ENCODE measurements at regions of chr5 and their contacts with region 1.

Region 1: DNA sequence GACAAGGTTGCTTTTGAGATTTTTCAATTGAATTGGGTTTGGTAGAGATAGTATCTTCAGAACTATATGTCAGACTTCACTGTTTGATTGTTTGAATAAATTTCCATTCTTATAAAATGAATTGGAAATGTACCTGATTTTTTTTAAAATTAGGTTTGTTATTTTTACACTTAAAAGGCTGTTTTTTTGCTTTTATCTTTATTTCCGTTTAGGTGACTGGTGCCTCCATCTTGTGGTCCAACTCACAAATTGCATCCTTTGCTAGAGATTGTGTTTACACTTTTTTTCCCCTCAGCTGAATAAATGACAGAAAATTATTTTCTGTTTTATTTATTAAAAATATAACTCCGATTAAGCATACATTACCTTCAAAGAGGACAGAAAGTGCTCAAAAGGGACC is 15.6 kb downstream of the NDUFAF2 start:
- DNase-seq: no peak
- H3K4me3 ChIP-seq: no peak overlapping the region
- H3K27ac ChIP-seq: no peak overlapping the region
- H3K4me1 ChIP-seq: no peaks in the 10 kb centered on the region
- H3K27me3 ChIP-seq: no peaks in the 10 kb centered on the region
- CTCF ChIP-seq: peak; percentile 51 to 56

Region 2: GRCh38 chr5:60677844-60678664 is 282.5 kb before region 1 on chr5:
- CTCF ChIA-PET with region 1: no interaction called
- dilution Hi-C with region 1: no loop called
- in situ Hi-C with region 1: no loop called
- intact Hi-C with region 1: no loop called
- DNase-seq: peak; percentile 37
- H3K4me3 ChIP-seq: no peak overlapping the region
- H3K27ac ChIP-seq: no peak overlapping the region
- H3K4me1 ChIP-seq: no peaks in the 10 kb centered on the region
- H3K27me3 ChIP-seq: no peaks in the 10 kb centered on the region
- CTCF ChIP-seq: peak; percentile 50 to 58

Region 3: GRCh38 chr5:60929024-60929423 is 31.6 kb before region 1 on chr5:
- CTCF ChIA-PET with region 1: no interaction called
- dilution Hi-C with region 1: no loop called
- in situ Hi-C with region 1: no loop called
- intact Hi-C with region 1: no loop called
- DNase-seq: no peak
- H3K4me3 ChIP-seq: no peak overlapping the region
- H3K27ac ChIP-seq: no peak overlapping the region
- H3K4me1 ChIP-seq: no peaks in the 10 kb centered on the region
- H3K27me3 ChIP-seq: no peaks in the 10 kb centered on the region
- CTCF ChIP-seq: peak; percentile 20 to 38

Region 4: DNA sequence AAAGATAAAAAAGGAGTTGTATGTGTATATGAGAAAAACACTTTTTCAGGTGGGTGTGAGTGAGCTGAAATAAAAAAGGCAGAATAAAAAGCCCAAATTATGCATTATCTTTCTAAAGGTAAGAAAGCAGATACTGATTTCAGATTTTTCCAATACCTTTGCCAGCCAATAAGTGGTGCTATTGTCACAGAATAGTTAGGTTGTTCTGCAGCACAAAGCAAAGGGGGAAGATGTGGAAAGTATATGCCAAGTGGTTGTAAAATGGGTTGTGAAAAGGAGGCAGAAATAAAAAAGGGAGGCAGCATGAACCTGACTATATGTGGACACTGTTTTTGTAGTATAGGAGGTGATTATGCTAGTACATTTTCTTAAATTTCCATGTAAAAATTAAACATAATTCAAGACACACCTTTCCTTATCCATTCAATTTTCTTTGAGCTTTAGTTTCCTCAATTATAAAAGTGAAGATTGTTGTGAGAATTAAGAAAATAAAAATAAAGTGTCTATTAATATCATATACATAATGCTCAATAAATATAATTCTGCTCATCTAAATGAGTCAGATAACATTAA is 94.9 kb after region 1 on chr5:
- CTCF ChIA-PET with region 1: interaction called, 4 read pairs
- dilution Hi-C with region 1: no loop called
- in situ Hi-C with region 1: no loop called
- intact Hi-C with region 1: loop called (anchors 5 kb)
- DNase-seq: peak; percentile 40
- H3K4me3 ChIP-seq: no peak overlapping the region
- H3K27ac ChIP-seq: no peak overlapping the region
- H3K4me1 ChIP-seq: peaks cover 34% of the 10 kb centered on the region
- H3K27me3 ChIP-seq: no peaks in the 10 kb centered on the region
- CTCF ChIP-seq: peak; percentile 73 to 85

Region 5: DNA sequence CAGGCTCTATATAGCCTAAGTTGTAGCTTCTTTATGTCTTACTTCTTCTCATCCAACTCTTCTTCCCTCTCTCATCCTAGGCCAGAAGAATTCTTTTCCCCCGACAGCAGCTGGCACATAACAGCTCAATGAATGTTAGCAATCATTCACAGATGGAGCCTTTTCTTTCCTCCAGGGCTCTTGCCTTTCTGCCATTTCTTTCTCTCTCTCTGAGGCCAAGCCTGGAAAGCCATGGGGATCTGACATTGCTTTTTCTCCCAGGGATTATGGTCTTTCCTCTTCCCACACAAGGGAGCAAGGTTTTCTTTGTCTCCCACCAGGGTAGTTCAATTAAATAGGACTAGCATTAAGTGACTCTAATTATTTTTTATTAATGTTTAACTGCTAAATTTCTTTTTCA is 181.2 kb after region 1 on chr5:
- CTCF ChIA-PET with region 1: interaction called, 3 read pairs
- dilution Hi-C with region 1: no loop called
- in situ Hi-C with region 1: no loop called
- intact Hi-C with region 1: loop called (anchors 5 kb)
- DNase-seq: no peak
- H3K4me3 ChIP-seq: no peak overlapping the region
- H3K27ac ChIP-seq: no peak overlapping the region
- H3K4me1 ChIP-seq: no peaks in the 10 kb centered on the region
- H3K27me3 ChIP-seq: no peaks in the 10 kb centered on the region
- CTCF ChIP-seq: no peak

Region 6: GRCh38 chr5:61625681-61626621 is 665.4 kb after region 1 on chr5:
- CTCF ChIA-PET with region 1: no interaction called
- dilution Hi-C with region 1: no loop called
- in situ Hi-C with region 1: loop called in 1 of 2 experiments (anchors 25 kb)
- intact Hi-C with region 1: no loop called
- DNase-seq: no peak
- H3K4me3 ChIP-seq: peak overlapping the region; percentile 44 to 51 (median 49)
- H3K27ac ChIP-seq: no peak overlapping the region
- H3K4me1 ChIP-seq: peaks cover 6% of the 10 kb centered on the region
- H3K27me3 ChIP-seq: no peaks in the 10 kb centered on the region
- CTCF ChIP-seq: no peak

Measured in mammary epithelial cell (primary cell).